Ovary (tissue), 10 donors: ENCODE measurements at regions of chr5 and their contacts with region 1.

Region 1: GRCh38 chr5:73201547-73202513 is 28.8 kb downstream of the TMEM174 start:
- DNase-seq: peak; percentile 69 to 81 (median 78)
- H3K4me3 ChIP-seq: no peak overlapping the region
- H3K27ac ChIP-seq: no peak overlapping the region
- H3K4me1 ChIP-seq: no peaks in the 10 kb centered on the region
- H3K27me3 ChIP-seq: no peaks in the 10 kb centered on the region
- CTCF ChIP-seq: peak; percentile 45 to 57 (median 47)
- EP300 ChIP-seq: no peak
- POLR2A ChIP-seq: no peak

Region 2: GRCh38 chr5:73081093-73081492 is 120.7 kb before region 1 on chr5:
- intact Hi-C with region 1: loop called in 2 of 4 experiments (anchors 5 to 10 kb)
- DNase-seq: no peak
- H3K4me3 ChIP-seq: no peak overlapping the region
- H3K27ac ChIP-seq: no peak overlapping the region
- H3K4me1 ChIP-seq: no peaks in the 10 kb centered on the region
- H3K27me3 ChIP-seq: no peaks in the 10 kb centered on the region
- CTCF ChIP-seq: no peak
- EP300 ChIP-seq: no peak
- POLR2A ChIP-seq: no peak

Region 3: GRCh38 chr5:73088026-73088425 is 113.8 kb before region 1 on chr5:
- intact Hi-C with region 1: loop called in 2 of 4 experiments (anchors 5 to 10 kb)
- DNase-seq: no peak
- H3K4me3 ChIP-seq: no peak overlapping the region
- H3K27ac ChIP-seq: no peak overlapping the region
- H3K4me1 ChIP-seq: no peaks in the 10 kb centered on the region
- H3K27me3 ChIP-seq: no peaks in the 10 kb centered on the region
- CTCF ChIP-seq: no peak
- EP300 ChIP-seq: no peak
- POLR2A ChIP-seq: no peak